OCI-LY7 (cell line): ENCODE measurements at regions of chr6 and their contacts with region 1.

Region 1: DNA sequence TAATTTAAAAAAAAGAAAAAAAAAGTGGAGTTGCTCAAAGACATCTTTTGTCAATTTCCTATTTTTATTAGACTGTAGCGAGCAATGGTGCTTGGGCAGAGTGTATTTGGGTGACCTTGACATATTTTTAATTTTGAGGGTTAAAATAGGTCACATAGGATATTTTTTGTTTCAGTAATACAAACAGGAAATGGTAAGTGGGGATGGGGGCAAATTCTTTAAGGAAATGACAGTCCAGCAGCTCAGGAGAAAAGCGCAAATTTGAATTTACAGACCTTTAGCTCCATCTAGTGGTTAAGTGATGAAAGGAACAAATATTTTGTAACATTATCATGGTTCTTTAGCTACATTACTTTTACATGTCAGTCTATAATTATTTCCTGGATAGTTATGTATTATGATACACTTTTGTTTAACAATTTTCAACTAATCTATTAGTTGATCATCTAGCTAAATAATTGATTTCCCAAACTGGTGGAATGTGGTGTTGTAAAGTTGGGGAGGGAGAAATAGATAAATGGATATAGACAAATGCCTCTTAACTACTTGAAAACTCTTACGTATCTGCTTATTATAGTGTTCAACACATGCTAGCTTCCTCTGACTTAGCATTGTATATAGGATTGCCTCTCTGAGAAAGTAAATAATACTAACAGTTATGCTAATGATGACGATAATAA is 10.0 kb downstream of the CITED2 start:
- DNase-seq: peak; percentile 82
- H3K4me3 ChIP-seq: no peak overlapping the region
- H3K27ac ChIP-seq: peak overlapping the region; percentile 40
- H3K4me1 ChIP-seq: peaks cover 38% of the 10 kb centered on the region
- CTCF ChIP-seq: peak; percentile 92

Region 2: GRCh38 chr6:138817822-138818308 is 546.6 kb before region 1 on chr6:
- CTCF ChIA-PET with region 1: no interaction called
- POLR2A ChIA-PET with region 1: no interaction called
- intact Hi-C with region 1: loop called (anchors 2 kb)
- DNase-seq: no peak
- H3K4me3 ChIP-seq: no peak overlapping the region
- H3K27ac ChIP-seq: no peak overlapping the region
- H3K4me1 ChIP-seq: peaks cover 15% of the 10 kb centered on the region
- CTCF ChIP-seq: no peak

Region 3: DNA sequence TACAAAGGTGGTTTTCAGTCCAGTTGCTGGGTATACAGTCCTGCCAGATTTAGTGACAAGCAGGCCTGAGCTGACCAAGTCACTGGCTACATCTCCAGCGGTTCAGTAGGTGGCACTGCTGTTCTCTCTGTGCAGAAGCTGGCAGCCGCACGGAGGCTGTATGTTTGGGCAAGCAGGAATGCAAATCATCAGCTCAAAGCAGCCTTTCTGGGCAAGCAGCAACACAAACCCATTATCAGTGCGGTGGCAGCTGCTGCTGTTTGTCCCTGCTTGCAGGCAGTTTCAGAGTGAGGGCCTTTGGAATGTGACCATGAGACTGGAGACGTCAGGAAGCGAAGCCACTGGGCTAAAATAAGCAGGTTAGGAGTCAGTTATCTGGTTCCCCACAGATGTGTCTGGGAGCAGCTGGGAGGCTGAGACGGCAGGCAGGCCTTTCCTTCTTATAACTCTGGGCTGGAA is 145.1 kb before region 1 on chr6:
- CTCF ChIA-PET with region 1: interaction called, 19 read pairs
- POLR2A ChIA-PET with region 1: interaction called, 27 read pairs
- intact Hi-C with region 1: loop called (anchors 1 kb)
- DNase-seq: peak; percentile 96
- H3K4me3 ChIP-seq: peak overlapping the region; percentile 60
- H3K27ac ChIP-seq: peak overlapping the region; percentile 63
- H3K4me1 ChIP-seq: peaks cover 26% of the 10 kb centered on the region
- CTCF ChIP-seq: peak; percentile 98

Region 4: DNA sequence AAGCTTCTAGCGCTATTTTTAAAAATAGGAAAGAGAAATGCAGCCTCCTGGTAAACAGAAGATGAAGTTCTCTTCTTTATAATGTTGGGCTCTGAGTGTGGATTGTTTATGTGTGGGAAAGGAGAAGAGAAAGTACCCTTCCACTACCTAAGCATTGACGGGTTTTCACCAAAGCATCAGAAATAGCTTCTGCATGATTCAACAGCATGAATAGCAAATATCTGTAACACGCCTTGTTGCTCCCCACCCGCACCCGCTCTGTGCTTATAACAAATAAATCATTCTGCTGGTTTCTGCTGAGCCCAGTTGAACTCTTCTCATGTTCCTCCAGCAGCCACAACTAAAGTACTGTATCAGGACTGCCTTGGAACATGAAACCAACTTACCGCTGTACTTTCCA is 93.4 kb before region 1 on chr6:
- CTCF ChIA-PET with region 1: no interaction called
- POLR2A ChIA-PET with region 1: interaction called, 12 read pairs
- intact Hi-C with region 1: no loop called
- DNase-seq: peak; percentile 80
- H3K4me3 ChIP-seq: peak overlapping the region; percentile 63
- H3K27ac ChIP-seq: peak overlapping the region; percentile 89
- H3K4me1 ChIP-seq: peaks cover 89% of the 10 kb centered on the region
- CTCF ChIP-seq: no peak

Region 5: DNA sequence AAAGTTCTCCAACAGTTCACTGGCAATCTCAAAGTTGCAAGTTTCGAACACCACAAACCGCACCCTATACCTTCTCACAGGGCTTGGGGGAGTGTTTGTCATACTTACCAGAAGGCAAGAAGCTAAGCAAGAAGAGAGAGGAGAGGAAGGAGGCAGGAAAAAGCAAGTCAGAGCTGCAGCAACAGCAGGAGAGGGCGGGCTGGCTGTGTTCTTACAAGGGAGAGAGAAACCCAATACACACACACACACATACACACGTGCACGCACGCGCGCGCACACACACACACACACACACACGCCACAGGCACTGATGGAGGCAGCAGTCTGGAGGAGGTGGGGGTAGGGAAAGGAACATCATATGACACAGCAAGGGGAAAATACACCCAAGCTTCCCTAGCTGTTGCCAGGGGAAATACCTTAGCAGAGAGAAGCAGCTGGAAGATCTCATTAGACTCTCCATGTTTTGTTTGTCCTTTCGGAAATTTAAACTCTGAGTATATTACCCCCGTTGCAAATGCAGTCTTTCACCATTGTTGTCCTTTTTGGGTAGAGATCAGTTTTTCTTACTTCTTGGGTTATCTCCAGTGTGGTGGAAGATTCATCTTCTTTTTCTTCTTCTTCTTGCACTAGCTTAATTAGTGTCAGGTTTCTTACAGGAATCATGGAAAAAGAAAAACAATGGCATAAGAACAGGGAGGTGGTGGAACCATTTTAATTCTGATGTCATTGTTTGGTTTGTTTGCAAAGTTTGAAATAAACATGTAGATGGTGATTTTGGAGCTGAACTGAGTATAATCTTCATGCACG is 72.4 kb before region 1 on chr6 and contains the start of gene TXLNB:
- CTCF ChIA-PET with region 1: interaction called, 4 read pairs
- POLR2A ChIA-PET with region 1: no interaction called
- intact Hi-C with region 1: loop called (anchors 5 kb)
- DNase-seq: peak; percentile 76
- H3K4me3 ChIP-seq: peak within 1 kb of the TSS; percentile 64
- H3K27ac ChIP-seq: peak within 1 kb of the TSS; percentile 97
- H3K4me1 ChIP-seq: peaks cover 77% of the 10 kb centered on the region
- CTCF ChIP-seq: no peak
- total RNA-seq, gene TXLNB: 7.3 and 7.9 TPM in 2 replicates

Region 6: GRCh38 chr6:139386404-139386803 is 22.0 kb after region 1 on chr6:
- CTCF ChIA-PET with region 1: no interaction called
- POLR2A ChIA-PET with region 1: no interaction called
- intact Hi-C with region 1: no loop called
- DNase-seq: no peak
- H3K4me3 ChIP-seq: no peak overlapping the region
- H3K27ac ChIP-seq: no peak overlapping the region
- H3K4me1 ChIP-seq: no peaks in the 10 kb centered on the region
- CTCF ChIP-seq: no peak

Region 7: GRCh38 chr6:139490482-139490881 is 126.0 kb after region 1 on chr6:
- CTCF ChIA-PET with region 1: no interaction called
- POLR2A ChIA-PET with region 1: no interaction called
- intact Hi-C with region 1: no loop called
- DNase-seq: peak; percentile 39
- H3K4me3 ChIP-seq: no peak overlapping the region
- H3K27ac ChIP-seq: no peak overlapping the region
- H3K4me1 ChIP-seq: peaks cover 6% of the 10 kb centered on the region
- CTCF ChIP-seq: no peak